CD8-positive, alpha-beta memory T cell (primary cell): ENCODE measurements at regions of chr10 and their contacts with region 1.

Region 1: GRCh38 chr10:103888113-103888841 is 29.7 kb downstream of the STN1 start:
- DNase-seq: peak in 2 of 5 donors; percentile 50 to 56
- H3K4me3 ChIP-seq: no peak overlapping the region
- H3K4me3 Mint-ChIP-seq: no peak overlapping the region
- H3K27ac ChIP-seq: no peak overlapping the region
- H3K27ac Mint-ChIP-seq: peak overlapping the region in 6 of 8 donors; percentile 38 to 85 (median 67)
- H3K4me1 ChIP-seq: peaks cover 6% of the 10 kb centered on the region
- H3K4me1 Mint-ChIP-seq: peaks cover 25 to 50% (median 30%) of the 10 kb centered on the region in 3 donors
- H3K27me3 ChIP-seq: no peaks in the 10 kb centered on the region
- H3K27me3 Mint-ChIP-seq: no peaks in the 10 kb centered on the region

Region 2: GRCh38 chr10:103712570-103713498 is 175.4 kb before region 1 on chr10:
- CTCF ChIA-PET with region 1: interaction called, 21 read pairs
- POLR2A ChIA-PET with region 1: no interaction called
- DNase-seq: peak; percentile 59 to 80 (median 67)
- H3K4me3 ChIP-seq: no peak overlapping the region
- H3K4me3 Mint-ChIP-seq: no peak overlapping the region
- H3K27ac ChIP-seq: no peak overlapping the region
- H3K27ac Mint-ChIP-seq: peak overlapping the region in 2 of 8 donors; percentile 42 to 74
- H3K4me1 ChIP-seq: no peaks in the 10 kb centered on the region
- H3K4me1 Mint-ChIP-seq: peaks cover 0 to 4% (median 0%) of the 10 kb centered on the region in 3 donors
- H3K27me3 ChIP-seq: no peaks in the 10 kb centered on the region
- H3K27me3 Mint-ChIP-seq: peaks cover 1 to 3% of the 10 kb centered on the region in 2 donors

Region 3: DNA sequence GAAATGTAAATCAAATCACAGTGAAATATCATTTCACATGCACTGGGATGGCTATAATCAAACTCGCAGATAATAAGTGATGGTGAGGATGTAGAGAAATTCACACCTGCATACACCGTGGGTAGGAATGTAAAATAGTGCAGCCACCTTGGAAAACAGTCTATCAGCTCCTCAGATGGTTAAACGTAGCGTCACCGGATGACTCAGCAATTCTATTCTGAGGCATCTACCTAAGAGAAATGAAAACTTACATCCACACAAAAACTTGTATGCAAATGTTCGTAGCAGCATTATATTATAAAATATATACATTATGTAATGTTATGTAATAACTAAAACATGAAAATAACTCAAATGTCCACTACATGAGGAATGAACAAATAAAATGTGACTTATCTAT is 71.8 kb before region 1 on chr10:
- CTCF ChIA-PET with region 1: no interaction called
- POLR2A ChIA-PET with region 1: no interaction called
- DNase-seq: no peak
- H3K4me3 ChIP-seq: no peak overlapping the region
- H3K4me3 Mint-ChIP-seq: no peak overlapping the region
- H3K27ac ChIP-seq: no peak overlapping the region
- H3K27ac Mint-ChIP-seq: no peak overlapping the region
- H3K4me1 ChIP-seq: no peaks in the 10 kb centered on the region
- H3K4me1 Mint-ChIP-seq: no peaks in the 10 kb centered on the region
- H3K27me3 ChIP-seq: no peaks in the 10 kb centered on the region
- H3K27me3 Mint-ChIP-seq: peaks cover 19 to 26% of the 10 kb centered on the region in 2 donors

Region 4: GRCh38 chr10:103899336-103899735 is 11.1 kb after region 1 on chr10:
- CTCF ChIA-PET with region 1: interaction called, 12 read pairs
- POLR2A ChIA-PET with region 1: no interaction called
- DNase-seq: no peak
- H3K4me3 ChIP-seq: no peak overlapping the region
- H3K4me3 Mint-ChIP-seq: no peak overlapping the region
- H3K27ac ChIP-seq: no peak overlapping the region
- H3K27ac Mint-ChIP-seq: peak overlapping the region in 3 of 8 donors; percentile 54 to 60 (median 58)
- H3K4me1 ChIP-seq: peaks cover 30% of the 10 kb centered on the region
- H3K4me1 Mint-ChIP-seq: peaks cover 53 to 66% (median 53%) of the 10 kb centered on the region in 3 donors
- H3K27me3 ChIP-seq: no peaks in the 10 kb centered on the region
- H3K27me3 Mint-ChIP-seq: peaks cover 0 to 2% of the 10 kb centered on the region in 2 donors

Region 5: DNA sequence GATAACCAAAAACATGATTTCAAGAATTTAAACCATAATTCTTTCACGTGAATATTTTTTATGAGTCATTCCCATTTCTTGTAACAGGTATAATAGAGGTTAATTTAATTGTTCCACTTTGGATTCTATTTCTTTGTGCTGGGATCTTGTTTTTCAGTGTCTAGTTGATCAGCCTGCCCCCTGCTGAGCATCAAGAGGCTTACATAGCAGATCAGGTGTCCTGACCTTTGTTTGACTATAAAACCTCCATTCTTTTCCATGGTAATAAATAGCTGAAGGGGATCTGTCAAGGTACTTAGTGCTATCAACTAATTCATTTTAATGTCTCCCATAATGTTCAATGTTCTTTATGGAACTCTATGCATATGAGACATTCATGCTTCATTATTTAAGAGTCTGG is 192.5 kb after region 1 on chr10:
- CTCF ChIA-PET with region 1: interaction called, 17 read pairs
- POLR2A ChIA-PET with region 1: no interaction called
- DNase-seq: peak in 1 of 5 donors; percentile 4
- H3K4me3 ChIP-seq: no peak overlapping the region
- H3K4me3 Mint-ChIP-seq: no peak overlapping the region
- H3K27ac ChIP-seq: no peak overlapping the region
- H3K27ac Mint-ChIP-seq: no peak overlapping the region
- H3K4me1 ChIP-seq: no peaks in the 10 kb centered on the region
- H3K4me1 Mint-ChIP-seq: no peaks in the 10 kb centered on the region
- H3K27me3 ChIP-seq: no peaks in the 10 kb centered on the region
- H3K27me3 Mint-ChIP-seq: no peaks in the 10 kb centered on the region

Region 6: GRCh38 chr10:104121520-104122224 is 233.4 kb after region 1 on chr10 and contains the start of gene SFR1:
- CTCF ChIA-PET with region 1: interaction called, 13 read pairs
- POLR2A ChIA-PET with region 1: interaction called, 12 read pairs
- DNase-seq: peak; percentile 99 to 100 (median 99)
- H3K4me3 ChIP-seq: peak within 1 kb of the TSS; percentile 97
- H3K4me3 Mint-ChIP-seq: peak within 1 kb of the TSS; percentile 94 to 97 (median 96)
- H3K27ac ChIP-seq: peak within 1 kb of the TSS; percentile 100
- H3K27ac Mint-ChIP-seq: peak within 1 kb of the TSS; percentile 98 to 100 (median 99)
- H3K4me1 ChIP-seq: peaks cover 17% of the 10 kb centered on the region
- H3K4me1 Mint-ChIP-seq: peaks cover 19 to 28% (median 22%) of the 10 kb centered on the region in 3 donors
- H3K27me3 ChIP-seq: no peaks in the 10 kb centered on the region
- H3K27me3 Mint-ChIP-seq: peaks cover 1 to 11% of the 10 kb centered on the region in 2 donors
- total RNA-seq, gene SFR1: 13.6 to 15.5 TPM